Right ventricle myocardium inferior (tissue), 1 donor: ENCODE measurements at regions of chr11 and their contacts with region 1.

Region 1: DNA sequence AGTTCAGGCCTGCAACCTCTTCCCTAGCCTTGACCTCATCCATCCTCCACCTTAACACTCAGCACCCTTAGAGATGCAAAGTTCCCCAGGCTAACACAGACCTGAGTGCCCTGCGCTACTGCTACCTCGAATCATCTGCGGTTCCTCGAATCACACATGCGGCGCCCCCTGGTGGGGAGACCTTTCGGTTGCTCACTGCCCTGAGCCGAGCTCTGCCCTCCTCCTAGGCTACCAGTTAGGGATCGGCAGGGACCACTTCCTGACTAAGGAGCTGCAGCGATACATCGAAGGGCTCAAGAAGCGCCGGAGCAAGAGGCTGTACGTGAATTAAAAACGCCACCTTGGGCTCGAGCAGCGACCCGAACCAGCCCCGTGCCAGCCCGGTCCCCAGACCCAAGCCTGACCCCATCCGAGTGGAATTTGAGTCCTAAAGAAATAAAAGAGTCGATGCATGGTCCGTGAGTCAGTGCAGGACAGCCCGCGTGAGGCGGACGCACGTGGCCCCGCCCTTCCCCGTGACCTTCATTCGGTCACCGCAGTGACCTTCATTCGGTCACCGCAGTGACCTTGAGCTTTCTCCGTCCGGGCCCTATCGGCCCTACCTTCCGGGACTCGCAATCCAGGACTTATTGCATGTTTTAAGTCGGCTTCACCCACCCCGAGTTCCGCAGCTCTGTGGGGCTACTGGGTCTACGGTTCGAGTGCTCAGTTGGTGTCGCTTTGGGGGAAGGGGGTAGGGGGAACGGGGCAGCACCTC is 830 bp upstream of the ESRRA start:
- DNase-seq: peak; percentile 94
- ATAC-seq: peak; percentile 54

Region 2: GRCh38 chr11:64204464-64204989 is 100.0 kb before region 1 on chr11:
- intact Hi-C with region 1: loop called (anchors 1 kb)
- DNase-seq: peak; percentile 92
- ATAC-seq: peak; percentile 47

Region 3: DNA sequence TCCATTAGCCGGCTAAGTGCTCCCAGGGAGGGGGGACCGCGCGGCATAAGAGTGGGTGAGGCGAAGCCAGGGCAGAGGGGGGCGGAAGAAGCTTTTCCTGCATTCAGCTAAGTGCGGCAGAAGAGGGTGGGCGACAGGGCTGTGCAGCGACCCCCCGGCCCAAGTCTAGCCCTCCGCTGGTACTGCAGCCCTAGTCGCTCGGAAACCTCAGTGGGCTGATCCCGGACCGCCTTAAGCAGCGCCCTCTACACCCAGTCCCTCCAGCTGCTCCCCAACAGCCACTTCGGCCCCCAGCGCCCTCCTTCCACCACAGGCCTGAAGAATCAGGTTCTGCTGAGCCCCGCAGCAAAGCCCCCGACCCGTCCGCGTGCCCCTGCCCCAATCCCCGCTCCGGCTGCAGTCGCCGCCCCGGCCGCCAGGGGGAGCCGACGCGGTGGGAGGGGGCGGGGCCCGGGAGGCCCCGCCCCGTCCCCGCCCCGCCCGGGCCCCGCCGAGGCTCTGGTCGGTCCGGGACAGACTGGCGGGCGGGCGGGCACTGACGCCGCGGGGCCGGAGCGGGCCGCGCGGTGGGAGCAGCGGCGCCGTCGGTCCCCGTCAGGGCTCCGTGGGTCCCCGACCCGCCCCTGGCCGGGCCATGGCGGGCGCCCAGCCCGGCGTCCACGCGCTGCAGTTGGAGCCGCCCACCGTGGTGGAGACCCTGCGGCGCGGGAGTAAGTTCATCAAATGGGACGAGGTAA is 53.3 kb before region 1 on chr11 and contains the start of gene PLCB3:
- intact Hi-C with region 1: loop called (anchors 5 kb)
- DNase-seq: peak; percentile 86
- ATAC-seq: peak; percentile 63
- total RNA-seq, gene PLCB3: 10.9 TPM

Region 4: DNA sequence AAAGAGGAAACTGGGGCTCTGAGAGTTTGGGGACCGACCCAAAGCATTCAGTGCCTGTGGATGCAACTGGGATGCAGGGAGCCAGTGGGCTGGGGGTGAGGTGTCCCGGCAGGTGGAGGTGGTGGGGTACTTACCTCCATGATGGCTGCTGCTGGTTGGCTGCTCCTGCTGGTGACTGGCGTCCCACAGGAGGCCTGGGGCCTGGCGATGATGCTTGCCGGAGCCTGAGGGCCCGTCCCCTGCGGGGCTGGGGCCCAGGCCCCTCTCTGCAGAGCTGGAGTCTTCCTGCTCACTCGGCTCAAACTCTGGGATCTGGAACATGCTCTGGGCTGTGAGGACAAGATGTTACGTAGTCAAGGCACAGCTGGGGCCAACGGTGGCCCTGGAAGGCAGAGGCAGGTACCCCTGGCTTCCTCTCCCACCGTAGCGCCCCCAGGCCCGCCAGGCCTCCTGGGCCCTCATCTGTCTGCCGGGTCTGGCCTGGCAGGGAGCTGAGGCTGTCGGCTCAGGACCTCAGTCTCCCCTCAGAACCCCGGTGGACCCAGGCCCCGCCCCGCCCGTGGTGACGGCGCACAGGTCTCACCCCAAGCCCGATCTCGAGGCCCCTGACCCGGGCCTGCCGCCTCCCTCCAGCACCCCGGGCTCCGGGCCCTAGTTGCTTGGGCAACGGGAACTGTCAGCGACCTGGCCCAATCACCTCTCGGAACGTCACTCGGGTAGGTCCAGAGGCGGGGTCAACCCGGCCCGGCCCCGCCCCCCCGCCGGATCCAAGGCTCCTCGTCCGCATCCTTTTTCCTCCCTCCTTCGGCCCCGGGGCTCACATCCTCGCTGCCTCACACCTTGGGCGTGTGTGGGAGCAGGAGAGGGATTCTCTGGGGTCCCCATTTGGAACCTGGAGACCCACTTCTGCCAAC is 20.2 kb before region 1 on chr11 and contains the start of gene BAD:
- intact Hi-C with region 1: loop called (anchors 2 kb)
- DNase-seq: peak; percentile 96
- ATAC-seq: peak; percentile 92
- total RNA-seq, gene BAD: 89.1 TPM

Region 5: DNA sequence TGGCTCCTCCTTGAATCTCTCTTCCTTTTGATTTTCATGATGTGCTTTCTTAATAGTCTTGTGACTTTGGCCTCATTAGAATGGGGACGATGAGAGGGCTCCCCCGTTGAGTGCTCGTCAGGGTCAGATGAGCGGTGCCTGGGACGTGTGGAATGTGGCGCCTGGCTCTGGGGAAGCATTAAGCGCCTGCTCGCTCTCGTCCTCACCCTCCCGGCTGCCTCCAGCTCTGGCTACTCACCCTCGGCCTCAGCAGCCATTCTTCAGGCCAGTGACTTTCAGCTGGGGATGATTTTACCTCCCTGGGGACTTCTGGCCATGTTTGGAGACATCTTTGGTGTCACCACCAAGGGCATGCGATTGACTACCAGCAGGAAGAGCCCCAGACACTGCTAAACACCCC is 124.2 kb after region 1 on chr11:
- intact Hi-C with region 1: no loop called
- DNase-seq: no peak
- ATAC-seq: no peak

Region 6: DNA sequence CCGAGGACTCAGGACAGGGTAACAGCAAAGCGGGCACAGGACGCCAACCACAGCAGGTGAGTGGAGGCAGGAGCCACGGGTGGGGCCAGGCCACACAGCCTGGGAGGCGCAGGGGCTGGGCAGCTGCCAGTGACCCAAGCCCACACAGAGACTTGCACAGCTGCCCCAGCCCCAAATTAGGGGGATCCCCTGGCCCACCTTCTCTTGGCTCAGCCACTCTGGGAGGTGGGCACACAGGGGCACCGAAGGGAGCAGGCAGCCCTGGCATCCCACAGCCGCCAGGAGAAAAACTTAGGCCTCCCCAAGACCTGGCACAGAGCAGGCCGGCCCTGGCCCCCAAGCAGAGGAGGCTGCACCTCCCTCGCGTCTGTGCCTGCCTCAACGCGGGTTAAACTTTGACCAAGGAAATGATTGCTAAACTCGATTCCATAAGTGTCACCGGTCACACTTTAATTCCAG is 286.3 kb after region 1 on chr11 and contains the start of gene SLC22A12:
- intact Hi-C with region 1: no loop called
- DNase-seq: peak; percentile 47
- ATAC-seq: no peak
- total RNA-seq, gene SLC22A12: not detected